Mammary epithelial cell (primary cell): ENCODE measurements at regions of chr12 and their contacts with region 1.

Region 1: DNA sequence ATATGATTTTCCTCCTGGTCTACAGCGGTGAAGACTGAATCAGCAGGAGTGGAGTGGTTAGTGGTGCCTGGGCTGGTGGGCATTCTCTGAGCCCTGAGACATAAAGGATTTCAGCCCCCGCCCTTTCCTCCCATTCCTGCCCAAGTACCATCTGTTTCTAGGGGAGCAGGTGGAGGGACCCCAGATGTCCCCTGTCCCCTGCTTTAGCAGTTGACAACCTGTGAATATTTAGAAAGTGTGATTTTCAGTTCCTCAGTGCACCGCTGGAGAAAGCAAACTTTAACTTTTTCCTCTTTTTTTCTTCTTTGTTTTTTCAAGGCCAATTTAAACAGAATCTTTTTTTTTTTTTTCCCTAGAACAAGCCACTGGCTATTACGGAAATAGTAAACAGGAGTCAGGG is 163.8 kb upstream of the MYL2 start:
- DNase-seq: no peak
- H3K4me3 ChIP-seq: no peak overlapping the region
- H3K27ac ChIP-seq: no peak overlapping the region
- H3K4me1 ChIP-seq: no peaks in the 10 kb centered on the region
- H3K27me3 ChIP-seq: peaks cover 6% of the 10 kb centered on the region
- CTCF ChIP-seq: no peak

Region 2: DNA sequence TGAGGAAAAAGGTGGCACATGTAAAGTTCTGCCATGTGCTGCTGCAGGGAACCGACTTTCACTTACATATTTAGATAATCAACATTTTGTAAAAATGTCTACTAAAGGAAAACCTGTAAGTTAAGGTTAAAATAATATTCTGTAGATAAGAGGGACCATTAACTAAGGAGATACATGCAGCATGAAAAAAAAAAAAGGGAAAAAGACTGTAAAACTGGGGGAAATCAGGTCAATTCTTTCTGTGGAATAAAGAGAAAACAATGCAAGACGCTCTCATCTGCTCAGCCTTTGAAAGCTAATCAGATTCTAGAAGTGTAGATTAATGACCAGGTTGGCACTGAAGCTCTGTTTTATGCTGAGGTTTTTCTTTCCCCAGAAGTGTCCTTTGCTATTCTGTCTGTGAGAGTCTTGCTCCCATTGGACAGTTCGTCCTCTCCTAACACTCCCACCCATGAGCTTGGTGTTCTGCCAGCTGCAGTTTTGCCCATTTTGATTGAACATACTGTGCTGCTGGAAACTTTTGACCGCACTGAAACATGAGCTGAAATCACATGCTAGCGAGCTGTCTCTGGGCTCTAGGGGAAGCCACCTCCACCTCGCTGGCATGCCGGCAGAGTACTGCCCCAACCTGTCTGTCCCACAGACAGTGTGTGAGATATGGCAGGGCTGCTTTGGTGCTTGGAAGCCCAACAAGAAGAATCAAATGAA is 540.8 kb before region 1 on chr12:
- CTCF ChIA-PET with region 1: no interaction called
- dilution Hi-C with region 1: no loop called
- in situ Hi-C with region 1: no loop called
- intact Hi-C with region 1: no loop called
- DNase-seq: peak; percentile 98
- H3K4me3 ChIP-seq: no peak overlapping the region
- H3K27ac ChIP-seq: peak overlapping the region; percentile 68
- H3K4me1 ChIP-seq: peaks cover 52% of the 10 kb centered on the region
- H3K27me3 ChIP-seq: no peaks in the 10 kb centered on the region
- CTCF ChIP-seq: no peak

Region 3: DNA sequence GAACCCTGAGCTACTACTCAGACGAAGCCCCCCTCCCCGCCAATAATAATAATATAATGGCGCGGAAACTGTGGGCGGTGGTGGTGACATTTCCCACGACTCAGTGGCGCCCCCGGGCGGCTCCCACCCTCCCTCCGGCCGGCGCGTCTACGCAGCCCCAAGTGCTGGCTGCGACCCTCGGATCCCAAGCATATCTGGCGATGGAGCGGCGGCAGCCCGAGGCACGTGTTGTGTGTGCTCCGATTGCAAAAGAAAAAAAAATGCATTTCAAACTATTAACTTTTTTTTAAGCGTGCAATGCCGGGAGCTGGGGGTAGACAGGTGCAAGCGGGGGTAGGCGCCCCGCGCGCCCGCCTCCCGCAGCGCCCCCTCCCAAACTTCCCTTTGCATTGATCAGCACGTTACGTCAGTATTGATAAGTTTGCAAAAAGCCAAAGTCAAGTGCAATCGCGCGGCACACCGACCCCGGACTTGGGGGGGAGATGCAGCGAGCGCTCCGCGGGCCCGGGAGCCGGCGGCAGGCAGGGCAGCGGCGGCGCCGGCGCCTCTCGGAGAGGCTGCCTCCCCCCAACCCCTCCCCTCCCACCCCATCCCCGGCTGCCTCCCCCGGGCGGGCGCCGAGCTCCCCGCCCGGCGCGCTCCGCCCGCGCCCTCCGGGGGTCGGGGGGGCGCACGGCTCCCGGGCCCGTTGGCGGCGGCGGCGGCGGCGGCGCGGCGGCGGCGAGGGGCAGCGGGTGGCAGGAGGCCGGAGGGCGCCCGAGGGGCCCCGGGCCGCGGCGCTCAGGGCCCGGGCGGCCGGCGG is 50.7 kb before region 1 on chr12:
- CTCF ChIA-PET with region 1: no interaction called
- dilution Hi-C with region 1: no loop called
- in situ Hi-C with region 1: no loop called
- intact Hi-C with region 1: no loop called
- DNase-seq: no peak
- H3K4me3 ChIP-seq: no peak overlapping the region
- H3K27ac ChIP-seq: no peak overlapping the region
- H3K4me1 ChIP-seq: no peaks in the 10 kb centered on the region
- H3K27me3 ChIP-seq: peaks cover 40% of the 10 kb centered on the region
- CTCF ChIP-seq: peak; percentile 1 to 28

Region 4: GRCh38 chr12:111117017-111117416 is 32.9 kb after region 1 on chr12:
- CTCF ChIA-PET with region 1: no interaction called
- dilution Hi-C with region 1: loop called (anchors 5 kb)
- in situ Hi-C with region 1: no loop called
- intact Hi-C with region 1: no loop called
- DNase-seq: no peak
- H3K4me3 ChIP-seq: no peak overlapping the region
- H3K27ac ChIP-seq: no peak overlapping the region
- H3K4me1 ChIP-seq: no peaks in the 10 kb centered on the region
- H3K27me3 ChIP-seq: peaks cover 2% of the 10 kb centered on the region
- CTCF ChIP-seq: no peak

Region 5: DNA sequence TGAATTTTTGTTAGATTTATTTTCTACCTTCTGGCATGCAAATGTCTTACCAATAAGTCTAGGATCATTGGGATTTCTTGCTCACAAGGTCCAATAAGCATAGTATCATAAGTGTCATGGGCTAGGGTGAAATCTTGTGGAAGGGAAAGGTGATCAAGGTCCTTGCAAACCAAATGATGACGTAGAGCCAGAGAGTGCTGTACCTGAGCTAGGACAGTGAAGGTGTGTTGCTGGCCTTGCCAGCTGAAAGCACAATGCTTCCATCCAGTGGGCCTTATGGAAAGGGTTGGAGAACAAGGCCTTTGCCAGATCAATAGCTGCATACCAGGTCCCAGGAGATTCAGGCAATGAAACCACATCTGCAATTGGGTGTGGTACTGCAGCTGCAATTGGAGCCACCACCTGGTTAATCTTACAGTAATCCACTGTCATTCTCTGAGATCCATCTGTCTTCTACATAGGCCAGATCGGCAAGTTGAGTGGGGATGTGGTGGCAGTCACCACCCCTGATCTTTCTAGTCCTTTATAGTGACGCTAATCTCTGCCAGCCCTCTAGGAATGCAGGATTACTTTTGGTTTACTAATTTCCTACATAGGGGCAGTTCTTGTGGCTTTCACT is 45.1 kb after region 1 on chr12:
- CTCF ChIA-PET with region 1: no interaction called
- dilution Hi-C with region 1: no loop called
- in situ Hi-C with region 1: no loop called
- intact Hi-C with region 1: no loop called
- DNase-seq: no peak
- H3K4me3 ChIP-seq: no peak overlapping the region
- H3K27ac ChIP-seq: no peak overlapping the region
- H3K4me1 ChIP-seq: no peaks in the 10 kb centered on the region
- H3K27me3 ChIP-seq: no peaks in the 10 kb centered on the region
- CTCF ChIP-seq: no peak